ENCODE measurements at regions of chr14 and their contacts with region 1.

Region 1: GRCh38 chr14:45253068-45253753 is at the start of gene MIS18BP1:
- DNase-seq: peak; percentile 90 to 95 (median 94)
- H3K4me3 ChIP-seq: peak within 1 kb of the TSS; percentile 61
- H3K4me3 Mint-ChIP-seq: peak within 1 kb of the TSS; percentile 91 to 98 (median 95)
- H3K27ac ChIP-seq: peak within 1 kb of the TSS; percentile 81
- H3K27ac Mint-ChIP-seq: peak within 1 kb of the TSS; percentile 90 to 99 (median 96)
- H3K4me1 ChIP-seq: peaks cover 28% of the 10 kb centered on the region
- H3K4me1 Mint-ChIP-seq: peaks cover 23 to 28% (median 27%) of the 10 kb centered on the region in 3 donors
- H3K27me3 ChIP-seq: no peaks in the 10 kb centered on the region
- H3K27me3 Mint-ChIP-seq: no peaks in the 10 kb centered on the region
- total RNA-seq, gene MIS18BP1: 25.2 to 28.2 TPM

Region 2: DNA sequence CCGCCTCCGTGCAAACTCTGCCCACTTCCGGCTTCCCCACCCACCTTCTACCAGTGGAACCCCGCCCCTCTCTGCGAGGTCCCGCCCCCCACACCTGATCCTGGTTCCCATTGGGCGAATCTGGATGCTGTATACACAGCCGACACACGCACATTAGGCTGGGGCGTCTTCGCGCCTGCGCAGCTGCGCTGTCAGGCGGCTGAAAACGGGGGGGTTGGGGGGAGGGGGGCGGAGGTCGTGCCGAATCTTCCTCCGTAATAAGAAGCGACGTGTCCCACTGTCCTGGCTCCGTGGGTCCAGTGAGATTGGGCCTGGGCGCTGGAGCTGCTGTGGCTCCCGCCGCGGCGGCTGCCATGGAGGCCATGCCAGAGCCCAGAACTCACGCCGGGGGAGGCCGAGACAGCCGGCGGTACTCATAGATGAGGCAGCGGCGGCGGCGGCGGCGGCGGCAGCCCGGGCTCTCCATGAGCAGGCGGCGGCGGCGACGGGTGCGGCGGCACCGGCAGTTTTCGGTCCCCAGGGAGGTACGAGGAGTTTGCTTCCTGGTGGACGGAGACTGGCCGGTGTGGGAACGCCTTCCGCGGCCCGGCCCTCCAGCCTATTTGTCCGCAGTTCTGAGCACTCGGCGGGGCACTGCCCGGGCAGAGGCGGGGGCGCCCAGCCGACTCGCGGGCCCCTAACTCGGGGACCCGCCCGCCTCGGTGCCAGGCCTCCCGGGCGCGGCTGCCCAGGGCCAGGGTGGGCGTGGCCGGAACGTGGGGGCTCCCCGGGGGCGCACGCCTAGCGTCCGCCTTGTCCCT is 356.0 kb before region 1 on chr14:
- CTCF ChIA-PET with region 1: interaction called, 10 read pairs
- POLR2A ChIA-PET with region 1: no interaction called
- DNase-seq: peak; percentile 89 to 99 (median 98)
- H3K4me3 ChIP-seq: peak overlapping the region; percentile 59
- H3K4me3 Mint-ChIP-seq: peak overlapping the region; percentile 84 to 97 (median 94)
- H3K27ac ChIP-seq: peak overlapping the region; percentile 73
- H3K27ac Mint-ChIP-seq: peak overlapping the region; percentile 86 to 99 (median 98)
- H3K4me1 ChIP-seq: peaks cover 19% of the 10 kb centered on the region
- H3K4me1 Mint-ChIP-seq: peaks cover 20 to 46% (median 24%) of the 10 kb centered on the region in 3 donors
- H3K27me3 ChIP-seq: no peaks in the 10 kb centered on the region
- H3K27me3 Mint-ChIP-seq: no peaks in the 10 kb centered on the region

Region 3: DNA sequence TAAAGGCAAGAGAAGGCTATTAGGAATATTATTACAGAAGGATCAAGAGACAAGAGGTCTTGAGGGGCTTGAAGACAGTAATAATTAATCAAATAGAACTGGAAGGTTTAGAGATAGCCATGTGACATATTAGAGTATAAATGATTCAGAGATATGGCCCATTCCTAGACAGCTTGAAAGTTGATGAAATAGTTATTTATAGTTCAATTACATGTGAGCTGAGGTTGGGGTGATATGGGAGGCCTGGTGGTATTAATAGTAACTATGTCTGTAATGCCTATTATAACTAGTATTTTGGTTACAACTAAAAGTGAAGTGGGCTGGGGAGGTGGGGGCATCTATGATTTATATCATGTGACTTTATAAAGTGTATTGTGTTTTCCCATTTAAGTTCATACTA is 13.9 kb after region 1 on chr14:
- CTCF ChIA-PET with region 1: interaction called, 13 read pairs
- POLR2A ChIA-PET with region 1: no interaction called
- DNase-seq: no peak
- H3K4me3 ChIP-seq: no peak overlapping the region
- H3K4me3 Mint-ChIP-seq: no peak overlapping the region
- H3K27ac ChIP-seq: no peak overlapping the region
- H3K27ac Mint-ChIP-seq: no peak overlapping the region
- H3K4me1 ChIP-seq: no peaks in the 10 kb centered on the region
- H3K4me1 Mint-ChIP-seq: no peaks in the 10 kb centered on the region
- H3K27me3 ChIP-seq: no peaks in the 10 kb centered on the region
- H3K27me3 Mint-ChIP-seq: peaks cover 1 to 3% of the 10 kb centered on the region in 2 donors

Region 4: GRCh38 chr14:45284802-45285201 is 31.6 kb after region 1 on chr14:
- CTCF ChIA-PET with region 1: no interaction called
- POLR2A ChIA-PET with region 1: no interaction called
- DNase-seq: no peak
- H3K4me3 ChIP-seq: no peak overlapping the region
- H3K4me3 Mint-ChIP-seq: no peak overlapping the region
- H3K27ac ChIP-seq: no peak overlapping the region
- H3K27ac Mint-ChIP-seq: no peak overlapping the region
- H3K4me1 ChIP-seq: no peaks in the 10 kb centered on the region
- H3K4me1 Mint-ChIP-seq: no peaks in the 10 kb centered on the region
- H3K27me3 ChIP-seq: no peaks in the 10 kb centered on the region
- H3K27me3 Mint-ChIP-seq: peaks cover 18 to 36% of the 10 kb centered on the region in 2 donors